ENCODE measurements at regions of chr3 and their contacts with region 1.

Region 1: DNA sequence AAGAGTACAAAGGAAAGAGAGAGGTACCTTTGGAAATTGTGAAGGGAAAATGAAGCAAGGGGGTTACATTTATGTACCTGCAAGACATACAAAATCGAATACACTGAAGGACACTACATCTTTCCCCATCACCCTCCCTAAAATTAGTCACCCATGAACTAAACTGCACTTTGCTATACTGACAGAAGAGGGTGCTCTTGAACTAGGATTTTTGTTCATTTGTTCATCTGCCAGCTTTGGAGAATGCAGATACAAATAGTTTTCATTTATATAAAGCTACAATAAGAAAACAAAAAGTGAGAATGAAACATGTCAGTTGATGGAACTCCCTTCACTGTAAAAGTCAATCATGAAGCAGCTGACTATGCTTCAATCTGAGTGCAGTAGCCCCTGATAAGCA is 55.7 kb downstream of the PCCB start:
- DNase-seq: peak; percentile 70
- ATAC-seq: peak; percentile 92
- H3K4me3 ChIP-seq: no peak overlapping the region
- H3K27ac ChIP-seq: no peak overlapping the region
- H3K4me1 ChIP-seq: no peaks in the 10 kb centered on the region
- H3K27me3 ChIP-seq: no peaks in the 10 kb centered on the region
- CTCF ChIP-seq: peak; percentile 87
- POLR2A ChIP-seq: no peak
- RAD21 ChIP-seq: peak; percentile 88

Region 2: GRCh38 chr3:136390574-136390973 is 84.7 kb after region 1 on chr3:
- CTCF ChIA-PET with region 1: interaction called, 3 read pairs
- POLR2A ChIA-PET with region 1: no interaction called
- dilution Hi-C with region 1: no loop called
- in situ Hi-C with region 1: no loop called
- intact Hi-C with region 1: loop called (anchors 5 kb)
- DNase-seq: no peak
- ATAC-seq: no peak
- H3K4me3 ChIP-seq: no peak overlapping the region
- H3K27ac ChIP-seq: no peak overlapping the region
- H3K4me1 ChIP-seq: peaks cover 4% of the 10 kb centered on the region
- H3K27me3 ChIP-seq: no peaks in the 10 kb centered on the region
- CTCF ChIP-seq: no peak
- POLR2A ChIP-seq: no peak
- RAD21 ChIP-seq: no peak

Region 3: DNA sequence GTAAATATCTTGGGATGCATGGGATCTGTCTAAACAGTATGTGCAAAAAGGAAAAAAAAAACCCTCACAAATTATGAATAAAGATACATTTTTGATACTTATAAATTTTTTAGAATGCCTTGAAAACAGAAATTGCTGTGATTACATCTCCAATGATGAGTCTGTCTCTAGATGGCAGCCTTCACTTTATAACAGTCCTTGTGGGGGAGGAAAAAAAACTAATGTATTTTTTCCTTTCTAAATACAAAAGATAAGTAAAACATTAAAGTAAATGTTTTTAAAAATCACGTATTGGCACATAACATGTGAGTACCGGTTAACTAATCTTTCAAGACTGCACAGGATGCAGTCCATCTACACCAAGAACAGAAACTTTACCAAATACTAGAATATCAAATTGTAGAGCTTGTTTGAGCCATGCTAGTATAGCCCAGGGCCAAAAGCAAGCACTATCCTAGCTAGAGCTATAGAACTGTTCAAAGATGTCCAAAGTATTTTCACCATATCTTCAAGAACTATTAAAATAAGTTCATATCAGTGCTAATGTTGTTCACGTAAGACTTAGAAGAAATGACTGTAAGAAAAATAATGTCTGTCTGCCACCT is 239.9 kb after region 1 on chr3:
- CTCF ChIA-PET with region 1: interaction called, 3 read pairs
- POLR2A ChIA-PET with region 1: no interaction called
- dilution Hi-C with region 1: no loop called
- in situ Hi-C with region 1: no loop called
- intact Hi-C with region 1: loop called (anchors 1 kb)
- DNase-seq: peak; percentile 51
- ATAC-seq: peak; percentile 54; the same call in 1 of the 2 replicates
- H3K4me3 ChIP-seq: no peak overlapping the region
- H3K27ac ChIP-seq: no peak overlapping the region
- H3K4me1 ChIP-seq: peaks cover 13% of the 10 kb centered on the region
- H3K27me3 ChIP-seq: no peaks in the 10 kb centered on the region
- CTCF ChIP-seq: peak; percentile 53
- POLR2A ChIP-seq: no peak
- RAD21 ChIP-seq: peak; percentile 54